Activated T-helper 2 cell treated with anti-CD3 and anti-CD28 coated beads, Interferon-gamma antibody, Interleukin-2, Interleukin-4, amounts not matched to agents 10 μg/mL and 5 μg/mL and 100 μg/mL, durations not matched to agents 14 hours and 24 hours and 36 hours (primary cell): ENCODE measurements at regions of chr19 and their contacts with region 1.

Region 1: DNA sequence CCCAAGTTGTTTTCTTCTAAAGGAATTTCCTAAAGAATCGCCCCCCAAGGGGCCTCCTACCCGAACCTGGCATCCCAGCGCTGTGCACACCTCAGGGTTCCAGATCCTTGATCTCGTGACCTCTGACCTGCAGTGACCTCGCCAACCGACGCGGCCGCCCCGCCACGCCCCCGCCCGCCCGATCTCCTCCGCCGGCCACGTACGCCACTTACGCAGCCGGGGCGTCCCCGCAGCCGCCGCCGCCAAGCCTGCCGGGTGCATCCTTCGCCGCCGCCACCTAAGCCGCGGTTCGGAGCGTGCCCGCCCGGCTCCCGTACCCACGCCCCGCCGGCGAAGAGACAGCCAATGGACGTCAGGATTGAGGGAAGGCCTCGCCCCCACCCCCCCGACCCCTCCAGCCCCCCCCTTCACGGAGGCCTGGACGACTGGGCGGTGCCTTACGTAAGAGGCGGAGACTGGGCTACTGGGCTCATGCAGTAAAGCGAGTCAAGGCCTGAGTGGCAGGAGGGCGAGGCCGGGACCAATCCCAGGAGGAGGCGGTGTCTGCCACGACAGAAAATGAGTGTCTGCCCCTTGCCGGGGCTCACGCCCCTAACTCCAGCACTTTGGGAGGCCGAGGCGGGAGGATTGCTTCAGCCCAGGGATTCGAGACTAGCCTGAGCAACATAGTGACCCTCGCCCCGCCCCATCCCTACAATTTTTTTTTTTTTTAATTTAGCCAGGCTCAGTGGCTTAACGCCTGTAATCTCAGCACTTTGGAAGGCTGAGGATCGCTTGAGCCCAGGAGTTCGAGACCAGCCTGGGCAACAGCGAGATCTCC is at the start of gene YIF1B:
- DNase-seq: peak; percentile 94
- H3K4me3 Mint-ChIP-seq: peak within 1 kb of the TSS; percentile 93
- H3K27ac Mint-ChIP-seq: peak within 1 kb of the TSS; percentile 90
- H3K4me1 Mint-ChIP-seq: peaks cover 41% of the 10 kb centered on the region
- H3K27me3 Mint-ChIP-seq: no peaks in the 10 kb centered on the region
- total RNA-seq, gene YIF1B: 106 and 114 TPM in 2 replicates

Region 2: DNA sequence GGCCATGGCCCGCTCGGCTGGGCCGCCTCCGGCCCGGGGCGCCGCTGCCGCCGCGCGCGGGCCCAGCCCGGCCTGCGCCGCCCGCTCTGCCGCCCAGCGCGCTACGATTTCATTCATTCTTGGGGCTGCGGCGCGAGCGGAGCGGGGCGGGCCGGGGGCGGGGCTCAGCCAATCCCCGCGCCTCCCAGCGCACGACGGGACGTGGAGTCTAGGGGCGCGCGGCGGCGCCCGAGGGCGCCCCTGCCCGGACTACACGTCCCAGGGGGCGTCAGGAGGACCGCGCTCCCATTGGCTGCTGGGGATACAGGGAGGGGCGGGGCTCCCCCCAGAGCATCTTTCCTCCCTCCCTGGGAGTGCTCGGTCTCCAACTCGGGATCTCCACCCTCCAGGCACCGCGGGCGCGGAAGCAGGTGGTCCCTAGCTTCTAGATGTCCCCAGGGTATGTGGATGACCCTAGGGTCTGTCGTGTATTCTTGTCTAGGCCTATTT is 86.2 kb before region 1 on chr19:
- intact Hi-C with region 1: loop called (anchors 5 kb)
- DNase-seq: peak; percentile 71
- H3K4me3 Mint-ChIP-seq: peak overlapping the region; percentile 26
- H3K27ac Mint-ChIP-seq: no peak overlapping the region
- H3K4me1 Mint-ChIP-seq: peaks cover 10% of the 10 kb centered on the region
- H3K27me3 Mint-ChIP-seq: peaks cover 43% of the 10 kb centered on the region

Region 3: GRCh38 chr19:38263689-38264485 is 52.0 kb before region 1 on chr19:
- intact Hi-C with region 1: loop called (anchors 2 kb)
- DNase-seq: peak; percentile 75
- H3K4me3 Mint-ChIP-seq: peak overlapping the region; percentile 95
- H3K27ac Mint-ChIP-seq: peak overlapping the region; percentile 98
- H3K4me1 Mint-ChIP-seq: peaks cover 50% of the 10 kb centered on the region
- H3K27me3 Mint-ChIP-seq: no peaks in the 10 kb centered on the region

Region 4: DNA sequence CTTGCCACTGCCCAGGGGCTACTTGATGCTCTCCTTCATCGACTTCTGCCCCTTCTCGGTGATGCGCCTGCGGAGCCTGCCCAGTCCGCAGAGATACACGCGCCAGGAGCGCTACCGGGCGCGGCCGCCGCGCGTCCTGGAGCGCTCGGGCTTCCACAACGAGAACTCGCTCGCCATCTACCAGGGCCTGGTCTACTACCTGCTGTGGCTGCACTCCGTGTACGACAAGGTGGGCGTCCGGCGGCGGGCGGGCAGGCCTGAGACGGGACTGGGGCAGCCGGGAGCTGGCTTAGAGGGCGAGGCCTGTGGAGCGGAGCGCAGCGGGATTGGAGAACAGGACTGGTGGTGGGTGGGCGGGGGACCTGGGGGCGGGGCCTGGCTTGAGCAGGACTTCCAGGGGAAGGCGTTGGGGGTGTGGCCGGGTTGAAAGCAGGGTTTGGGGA is 45.8 kb after region 1 on chr19:
- intact Hi-C with region 1: no loop called
- DNase-seq: peak; percentile 77
- H3K4me3 Mint-ChIP-seq: peak overlapping the region; percentile 88
- H3K27ac Mint-ChIP-seq: peak overlapping the region; percentile 81
- H3K4me1 Mint-ChIP-seq: peaks cover 11% of the 10 kb centered on the region
- H3K27me3 Mint-ChIP-seq: peaks cover 33% of the 10 kb centered on the region